Heart right ventricle (tissue), 16 donors: ENCODE measurements at regions of chr7 and their contacts with region 1.

Region 1: DNA sequence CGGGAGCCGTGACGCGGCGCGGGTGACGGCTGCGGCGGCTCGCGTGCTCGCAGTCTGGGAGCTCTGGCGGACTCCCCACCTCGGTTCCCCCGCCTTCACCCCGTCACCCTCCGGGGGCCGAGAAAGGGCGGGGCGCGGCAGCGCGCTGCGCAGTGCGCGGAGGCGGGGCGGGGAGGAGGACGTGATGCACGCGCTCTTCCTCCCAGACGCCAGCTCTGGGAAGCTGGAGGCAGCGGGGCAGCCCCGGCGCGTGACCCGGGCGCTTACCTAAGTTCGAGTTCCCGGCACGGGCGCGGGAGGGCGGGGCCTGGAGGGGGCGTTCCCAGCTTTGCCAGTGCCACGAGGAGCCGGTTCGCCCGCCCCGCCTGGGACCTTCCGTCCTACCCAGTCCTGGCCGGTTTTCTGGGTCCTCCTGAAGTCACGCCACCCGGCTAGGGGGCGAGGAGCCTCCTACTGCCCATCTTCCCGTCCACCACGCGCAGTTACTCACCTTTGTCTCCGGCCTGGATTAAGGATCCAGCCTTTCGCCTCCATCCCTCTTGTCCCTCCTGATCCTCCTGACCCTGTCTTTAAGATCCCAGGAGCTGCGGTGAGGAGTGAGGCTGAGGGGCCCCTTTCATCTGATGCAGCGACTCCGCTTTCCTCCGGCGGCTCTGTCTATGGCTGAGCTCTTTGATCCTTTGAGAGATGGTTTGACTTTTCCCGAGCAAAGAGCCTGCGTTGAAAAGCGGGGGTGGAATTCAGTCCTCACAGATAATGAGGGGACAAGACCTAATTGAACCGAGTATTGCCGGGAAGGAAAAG is 470 bp upstream of the NAMPT start:
- DNase-seq: peak; percentile 96 to 97
- ATAC-seq: peak; percentile 95 to 99 (median 96)
- H3K4me3 ChIP-seq: peak overlapping the region; percentile 60 to 80 (median 75)
- H3K27ac ChIP-seq: peak overlapping the region; percentile 86 to 99 (median 96)
- H3K4me1 ChIP-seq: peaks cover 0 to 44% (median 25%) of the 10 kb centered on the region in 9 donors
- H3K27me3 ChIP-seq: no peaks in the 10 kb centered on the region
- CTCF ChIP-seq: peak in 1 of 9 donors; percentile 24

Region 2: DNA sequence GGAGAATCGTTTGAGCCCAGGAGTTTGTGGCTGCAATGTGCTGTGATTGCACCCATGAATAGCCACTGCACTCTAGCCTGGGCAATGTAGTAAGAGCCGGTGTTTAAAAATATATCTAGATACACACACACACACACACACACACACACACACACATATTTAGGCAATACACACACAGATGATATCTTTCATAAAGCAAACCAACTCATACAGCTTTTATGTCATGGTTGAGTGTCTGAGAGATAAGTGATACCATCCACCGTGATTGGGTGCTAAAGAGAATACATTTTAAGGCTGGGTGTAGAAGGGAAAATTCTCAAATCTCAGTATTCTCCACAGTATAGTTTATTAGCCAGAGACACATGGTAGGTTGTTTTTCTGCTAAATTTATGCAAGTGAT is 115.5 kb before region 1 on chr7:
- intact Hi-C with region 1: no loop called
- DNase-seq: no peak
- ATAC-seq: no peak
- H3K4me3 ChIP-seq: no peak overlapping the region
- H3K27ac ChIP-seq: no peak overlapping the region
- H3K4me1 ChIP-seq: peaks cover 0 to 23% (median 5%) of the 10 kb centered on the region in 9 donors
- H3K27me3 ChIP-seq: no peaks in the 10 kb centered on the region
- CTCF ChIP-seq: no peak

Region 3: GRCh38 chr7:106313966-106314365 is 28.7 kb after region 1 on chr7:
- intact Hi-C with region 1: loop called in 1 of 10 experiments (anchors 1 kb)
- DNase-seq: no peak
- ATAC-seq: peak in 5 of 8 donors; percentile 39 to 72 (median 49)
- H3K4me3 ChIP-seq: no peak overlapping the region
- H3K27ac ChIP-seq: peak overlapping the region in 5 of 10 donors; percentile 33 to 84 (median 43)
- H3K4me1 ChIP-seq: peaks cover 0 to 23% (median 0%) of the 10 kb centered on the region in 9 donors
- H3K27me3 ChIP-seq: peaks cover 0 to 4% (median 0%) of the 10 kb centered on the region in 7 donors
- CTCF ChIP-seq: no peak

Region 4: DNA sequence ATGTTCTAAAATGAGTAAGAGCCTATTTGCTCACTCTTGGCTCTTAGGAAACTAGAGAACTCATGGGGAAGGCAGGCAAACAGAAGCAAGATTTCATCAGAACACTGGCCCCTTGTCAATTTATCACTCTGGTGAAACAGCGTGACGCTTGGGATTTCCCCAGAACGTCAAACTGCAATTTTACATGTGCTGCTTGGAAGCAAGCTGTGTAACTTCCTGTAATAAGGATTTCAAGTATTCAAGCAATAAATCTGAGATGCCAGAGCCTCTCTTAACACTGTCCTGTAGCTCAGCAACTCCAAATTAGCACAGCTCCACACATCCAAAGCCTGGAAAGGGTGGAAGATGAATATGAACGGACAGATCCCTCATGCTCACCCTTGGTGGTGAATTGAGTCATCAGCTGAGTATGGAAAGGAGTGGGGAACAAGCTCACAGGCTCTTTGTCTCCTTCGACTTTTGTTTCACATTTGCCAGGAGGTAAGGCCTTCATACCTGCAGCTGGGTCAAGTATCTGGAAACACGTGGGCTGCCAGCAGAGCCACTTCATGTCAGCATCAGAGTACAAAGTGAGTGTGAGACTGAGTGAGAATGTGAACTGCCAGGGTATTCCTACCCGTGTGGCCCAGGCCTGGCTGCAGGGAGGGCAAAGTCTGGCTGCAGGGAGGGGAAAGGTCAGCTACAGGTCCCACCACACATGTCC is 139.9 kb after region 1 on chr7:
- intact Hi-C with region 1: loop called in 2 of 10 experiments (anchors 5 to 10 kb)
- DNase-seq: peak in 1 of 2 donors; percentile 67
- ATAC-seq: peak; percentile 65 to 84 (median 74)
- H3K4me3 ChIP-seq: peak overlapping the region in 1 of 10 donors; percentile 33
- H3K27ac ChIP-seq: peak overlapping the region in 6 of 10 donors; percentile 37 to 93 (median 68)
- H3K4me1 ChIP-seq: peaks cover 0 to 55% (median 27%) of the 10 kb centered on the region in 9 donors
- H3K27me3 ChIP-seq: no peaks in the 10 kb centered on the region
- CTCF ChIP-seq: no peak

Region 5: DNA sequence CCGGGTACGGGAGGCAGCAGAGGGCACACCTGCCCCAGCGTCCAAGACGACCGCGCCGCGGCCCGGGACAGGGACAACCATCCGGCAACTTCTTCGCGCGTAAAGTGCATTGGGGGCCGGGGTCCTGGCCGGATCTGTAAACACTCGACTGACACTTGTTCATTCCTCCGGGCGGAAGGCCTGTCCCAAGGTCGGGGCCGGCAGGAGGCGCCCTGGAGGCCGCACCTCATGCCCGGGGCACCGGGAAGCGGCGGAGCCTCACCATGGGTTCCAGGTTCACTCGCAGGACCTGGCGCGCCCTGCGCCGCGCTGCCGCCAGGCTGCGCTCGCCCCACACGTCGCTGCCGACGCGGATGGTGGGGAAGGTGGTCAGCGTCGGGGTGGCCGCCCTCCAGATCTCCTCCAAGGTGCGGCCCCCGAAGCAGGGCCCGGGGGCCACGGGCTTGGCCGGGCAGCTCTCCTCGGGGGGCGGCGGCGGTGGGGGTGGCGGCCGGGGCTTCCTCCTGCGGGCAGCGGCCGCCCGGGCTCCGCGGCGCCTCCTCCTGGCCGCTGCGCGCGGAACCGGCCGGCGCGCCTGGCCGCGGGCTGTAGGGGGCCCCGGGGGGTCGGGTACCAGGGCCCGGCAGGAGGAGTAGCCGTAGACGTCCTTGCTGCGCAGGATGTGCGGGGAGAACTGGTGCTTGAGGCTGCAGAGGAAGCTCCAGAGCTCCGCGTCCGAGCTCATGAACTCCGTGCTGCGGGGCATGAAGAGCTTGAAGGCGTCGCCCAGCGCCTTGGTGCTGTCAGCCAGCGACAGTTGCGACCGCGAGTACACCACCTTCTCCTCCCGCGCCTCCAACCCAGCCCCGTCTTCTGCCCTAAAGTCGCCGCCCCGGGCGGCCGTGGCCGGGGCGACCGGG is 375.0 kb after region 1 on chr7:
- intact Hi-C with region 1: loop called in 2 of 10 experiments (anchors 5 to 10 kb)
- DNase-seq: peak; percentile 61 to 78
- ATAC-seq: peak; percentile 59 to 80 (median 68)
- H3K4me3 ChIP-seq: peak overlapping the region; percentile 69 to 95 (median 82)
- H3K27ac ChIP-seq: peak overlapping the region; percentile 86 to 98 (median 94)
- H3K4me1 ChIP-seq: peaks cover 0 to 35% (median 27%) of the 10 kb centered on the region in 9 donors
- H3K27me3 ChIP-seq: no peaks in the 10 kb centered on the region
- CTCF ChIP-seq: peak; percentile 61 to 84 (median 72)